ENCODE measurements at regions of chr16 and their contacts with region 1.

Region 1: DNA sequence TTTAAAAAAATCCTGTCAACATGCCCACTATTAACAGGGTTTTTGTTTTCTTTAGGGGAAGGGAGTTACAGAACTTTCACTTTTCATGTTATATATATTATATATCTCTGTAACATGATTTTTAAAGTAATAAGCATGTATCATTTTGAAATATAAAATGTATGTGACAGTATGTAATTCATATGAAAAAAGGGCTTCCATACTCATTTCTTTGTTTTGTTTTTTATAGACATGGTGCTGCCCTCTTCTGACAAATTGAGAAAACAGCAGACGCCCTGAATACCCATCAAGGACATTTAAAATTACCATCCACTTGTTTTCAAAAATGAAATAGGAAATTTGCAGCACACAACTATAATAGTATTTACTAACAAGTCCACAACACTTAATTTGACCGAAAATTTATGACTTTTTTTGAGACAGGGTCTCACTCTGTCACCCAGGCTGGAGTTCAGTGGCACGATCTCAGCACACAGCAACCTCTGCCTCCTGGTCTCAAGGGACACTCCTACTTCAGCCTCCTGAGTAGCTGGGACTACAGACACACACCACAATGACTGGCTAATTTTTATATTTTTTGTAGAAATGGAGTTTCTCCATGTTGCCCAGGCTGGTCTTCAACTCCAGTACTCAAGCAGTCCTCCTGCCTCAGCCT is 30.4 kb downstream of the CFDP1 start:
- DNase-seq: no peak
- ATAC-seq: peak in 1 of 2 donors; percentile 51
- H3K4me3 ChIP-seq: no peak overlapping the region
- H3K27ac ChIP-seq: no peak overlapping the region
- H3K4me1 ChIP-seq: no peaks in the 10 kb centered on the region
- H3K27me3 ChIP-seq: no peaks in the 10 kb centered on the region

Region 2: DNA sequence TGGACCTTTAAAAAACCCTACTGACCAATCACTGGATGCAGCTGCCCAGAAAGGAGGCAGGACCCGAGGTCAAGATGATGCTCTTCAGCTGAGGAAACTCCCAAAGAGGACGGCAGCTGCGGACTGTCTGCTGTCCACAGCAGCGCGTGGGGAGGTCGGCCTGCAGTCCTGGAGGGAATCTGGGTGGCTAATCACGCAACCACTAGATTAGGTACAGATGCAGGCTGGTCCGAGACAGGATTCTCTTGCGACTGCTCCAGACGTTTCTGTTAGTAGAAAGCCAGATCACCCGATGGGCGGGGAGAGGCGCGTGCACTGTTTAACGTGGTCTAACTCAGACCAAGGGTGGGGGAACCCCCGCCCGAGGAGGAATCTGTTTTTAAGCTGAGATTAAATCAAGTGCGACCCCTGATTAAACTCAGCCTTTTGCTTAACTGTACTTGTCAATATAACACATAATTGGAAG is 204.8 kb before region 1 on chr16:
- intact Hi-C with region 1: loop called in 2 of 4 experiments (anchors 2 kb)
- DNase-seq: no peak
- ATAC-seq: no peak
- H3K4me3 ChIP-seq: no peak overlapping the region
- H3K27ac ChIP-seq: no peak overlapping the region
- H3K4me1 ChIP-seq: no peaks in the 10 kb centered on the region
- H3K27me3 ChIP-seq: no peaks in the 10 kb centered on the region

Measured in right cardiac atrium (tissue), 5 donors.